CD4-positive, alpha-beta T cell (primary cell): ENCODE measurements at regions of chr19 and their contacts with region 1.

Region 1: DNA sequence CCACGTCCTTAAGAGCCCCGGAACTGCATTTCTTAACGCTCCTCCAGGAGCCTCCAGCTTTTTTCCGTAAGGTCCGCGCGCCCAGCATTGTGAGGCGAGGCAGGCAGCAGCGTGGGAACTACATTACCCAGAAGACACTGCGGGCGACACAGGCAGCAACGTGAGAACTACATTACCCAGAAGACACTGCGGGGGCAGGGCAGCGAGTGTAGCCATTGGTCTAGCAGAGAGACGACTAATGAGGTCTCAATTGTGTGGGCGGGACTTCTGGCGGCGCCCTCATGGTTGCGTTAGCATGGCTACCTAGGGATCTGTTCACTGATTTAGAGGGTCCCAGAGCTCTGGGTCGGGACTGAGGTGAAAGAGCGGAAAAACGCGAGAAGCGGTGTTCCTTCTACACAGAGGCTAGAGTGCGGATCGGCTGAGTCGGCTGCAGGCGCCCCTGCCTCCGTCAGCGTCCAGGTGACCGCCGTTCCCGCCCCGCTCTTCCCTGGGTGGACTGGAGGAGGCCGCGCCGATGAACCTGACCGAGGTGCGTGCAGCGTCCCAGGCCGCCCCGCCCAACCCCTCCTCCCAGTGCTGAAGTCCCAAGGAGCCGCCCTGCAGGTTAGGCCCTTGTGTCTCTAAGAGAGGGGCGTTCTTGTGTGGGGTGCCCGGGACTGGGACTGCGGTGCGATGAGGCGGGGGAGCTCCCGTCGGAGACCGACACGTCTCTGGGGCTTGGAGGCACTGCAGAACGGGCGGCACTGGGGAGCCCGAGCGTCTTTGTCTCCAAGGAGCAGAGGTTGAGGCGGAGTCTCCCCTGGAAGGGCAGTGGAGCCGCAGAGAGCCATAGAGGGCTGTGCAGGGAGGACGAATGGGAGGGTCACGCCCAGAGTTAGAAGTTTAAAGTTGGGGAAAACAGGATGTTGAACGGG is at the start of gene ZNF749:
- DNase-seq: peak; percentile 91 to 99 (median 97)
- ATAC-seq: peak; percentile 100
- H3K4me3 ChIP-seq: peak within 1 kb of the TSS; percentile 79
- H3K4me3 Mint-ChIP-seq: peak within 1 kb of the TSS; percentile 97
- H3K27ac ChIP-seq: peak within 1 kb of the TSS; percentile 47 to 67
- H3K27ac Mint-ChIP-seq: peak within 1 kb of the TSS; percentile 70
- H3K4me1 ChIP-seq: peaks cover 21% of the 10 kb centered on the region
- H3K4me1 Mint-ChIP-seq: peaks cover 31% of the 10 kb centered on the region
- H3K27me3 ChIP-seq: no peaks in the 10 kb centered on the region
- H3K27me3 Mint-ChIP-seq: no peaks in the 10 kb centered on the region
- CTCF ChIP-seq: no peak
- total RNA-seq, gene ZNF749: 5.7 to 6.2 TPM

Region 2: DNA sequence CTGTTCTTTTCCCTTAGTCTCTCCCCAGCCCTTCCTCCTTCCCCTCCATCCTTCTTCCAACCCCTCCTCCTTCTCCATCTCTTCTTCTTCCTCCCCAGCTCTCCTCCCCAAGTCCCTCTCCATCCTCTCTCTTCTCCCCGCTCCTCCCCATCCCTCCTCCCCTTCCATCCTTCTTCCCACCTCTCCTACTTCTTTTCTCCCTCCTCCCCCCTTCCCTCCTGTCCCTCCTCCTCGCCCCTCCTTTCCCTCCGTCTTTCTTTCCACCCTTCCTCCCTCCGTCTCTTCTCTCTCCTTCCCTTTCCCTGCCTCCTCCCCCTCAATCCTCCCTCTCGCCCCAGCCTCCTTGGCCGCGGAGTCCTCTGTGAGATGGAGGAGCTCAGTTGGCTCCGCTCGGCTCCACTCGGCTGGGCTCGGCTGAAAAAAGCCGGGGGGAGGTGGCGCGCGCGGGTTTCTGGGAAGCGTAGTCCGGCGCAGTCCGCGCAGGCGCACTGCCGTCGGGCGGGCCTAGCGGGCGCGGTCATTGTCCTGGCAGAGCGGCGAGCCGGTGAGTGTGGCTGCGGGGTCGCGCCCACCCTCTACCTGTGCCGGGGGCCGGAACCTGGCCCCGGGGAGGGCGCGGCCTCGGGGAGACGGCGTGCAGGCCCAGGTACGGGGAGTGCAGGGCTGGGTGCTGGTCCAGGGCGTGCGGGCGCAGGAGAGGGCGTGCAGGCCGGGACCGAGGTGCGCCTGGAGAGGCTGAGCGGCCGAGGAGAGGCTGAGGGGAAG is 840.4 kb before region 1 on chr19 and contains the start of gene ZNF71:
- CTCF ChIA-PET with region 1: no interaction called
- POLR2A ChIA-PET with region 1: no interaction called
- intact Hi-C with region 1: loop called in 1 of 2 experiments (anchors 10 kb)
- DNase-seq: peak; percentile 79 to 90 (median 84)
- ATAC-seq: peak; percentile 95
- H3K4me3 ChIP-seq: peak within 1 kb of the TSS; percentile 73
- H3K4me3 Mint-ChIP-seq: peak within 1 kb of the TSS; percentile 92
- H3K27ac ChIP-seq: peak within 1 kb of the TSS; percentile 43 to 62
- H3K27ac Mint-ChIP-seq: peak within 1 kb of the TSS; percentile 79
- H3K4me1 ChIP-seq: peaks cover 19% of the 10 kb centered on the region
- H3K4me1 Mint-ChIP-seq: peaks cover 24% of the 10 kb centered on the region
- H3K27me3 ChIP-seq: no peaks in the 10 kb centered on the region
- H3K27me3 Mint-ChIP-seq: no peaks in the 10 kb centered on the region
- CTCF ChIP-seq: no peak
- total RNA-seq, gene ZNF71: 2.2 TPM

Region 3: DNA sequence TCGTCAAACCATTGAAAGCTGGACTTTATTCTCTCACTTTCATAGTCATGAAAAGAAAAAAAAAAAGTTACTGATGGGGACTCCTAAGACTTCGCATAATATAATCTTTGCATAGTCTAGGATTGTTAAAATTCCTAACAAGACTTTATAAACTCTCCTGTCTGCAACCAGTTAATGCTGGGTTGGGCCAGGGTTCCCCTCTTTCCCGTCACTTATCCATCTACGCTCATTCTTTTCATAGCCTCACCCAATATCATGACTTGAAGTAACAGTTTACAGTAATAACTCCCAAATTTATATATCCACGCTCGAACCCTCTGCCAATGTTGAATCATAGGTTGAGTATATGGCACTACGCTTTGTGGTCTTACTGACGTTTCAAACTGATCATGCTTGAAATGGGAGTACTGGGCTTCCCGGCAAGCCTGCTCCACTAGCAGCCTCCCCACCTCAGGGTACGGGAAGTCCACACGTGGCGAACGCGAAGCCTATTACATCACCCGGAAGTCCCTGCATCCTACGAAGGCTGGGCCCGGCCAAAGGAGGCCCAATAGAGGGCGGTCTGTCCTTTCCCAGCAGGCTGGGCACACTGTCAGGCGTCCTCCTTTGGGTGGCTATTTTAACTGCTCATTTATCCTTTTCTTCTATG is 155.8 kb before region 1 on chr19:
- CTCF ChIA-PET with region 1: no interaction called
- POLR2A ChIA-PET with region 1: no interaction called
- intact Hi-C with region 1: loop called in 1 of 2 experiments (anchors 2 kb)
- DNase-seq: peak; percentile 59 to 93 (median 70)
- ATAC-seq: peak; percentile 66
- H3K4me3 ChIP-seq: peak overlapping the region; percentile 76
- H3K4me3 Mint-ChIP-seq: no peak overlapping the region
- H3K27ac ChIP-seq: peak overlapping the region; percentile 95 to 100
- H3K27ac Mint-ChIP-seq: no peak overlapping the region
- H3K4me1 ChIP-seq: peaks cover 42% of the 10 kb centered on the region
- H3K4me1 Mint-ChIP-seq: peaks cover 27% of the 10 kb centered on the region
- H3K27me3 ChIP-seq: no peaks in the 10 kb centered on the region
- H3K27me3 Mint-ChIP-seq: no peaks in the 10 kb centered on the region
- CTCF ChIP-seq: no peak

Region 4: GRCh38 chr19:57389730-57390598 is 45.4 kb before region 1 on chr19 and contains the start of gene ZNF548:
- CTCF ChIA-PET with region 1: no interaction called
- POLR2A ChIA-PET with region 1: no interaction called
- intact Hi-C with region 1: loop called (anchors 1 to 2 kb)
- DNase-seq: peak; percentile 87 to 99 (median 95)
- ATAC-seq: peak; percentile 96
- H3K4me3 ChIP-seq: peak within 1 kb of the TSS; percentile 86
- H3K4me3 Mint-ChIP-seq: peak within 1 kb of the TSS; percentile 98
- H3K27ac ChIP-seq: peak within 1 kb of the TSS; percentile 86 to 95
- H3K27ac Mint-ChIP-seq: peak within 1 kb of the TSS; percentile 95
- H3K4me1 ChIP-seq: peaks cover 18% of the 10 kb centered on the region
- H3K4me1 Mint-ChIP-seq: peaks cover 33% of the 10 kb centered on the region
- H3K27me3 ChIP-seq: no peaks in the 10 kb centered on the region
- H3K27me3 Mint-ChIP-seq: no peaks in the 10 kb centered on the region
- CTCF ChIP-seq: no peak
- total RNA-seq, gene ZNF548: 68.3 to 70.4 TPM

Region 5: DNA sequence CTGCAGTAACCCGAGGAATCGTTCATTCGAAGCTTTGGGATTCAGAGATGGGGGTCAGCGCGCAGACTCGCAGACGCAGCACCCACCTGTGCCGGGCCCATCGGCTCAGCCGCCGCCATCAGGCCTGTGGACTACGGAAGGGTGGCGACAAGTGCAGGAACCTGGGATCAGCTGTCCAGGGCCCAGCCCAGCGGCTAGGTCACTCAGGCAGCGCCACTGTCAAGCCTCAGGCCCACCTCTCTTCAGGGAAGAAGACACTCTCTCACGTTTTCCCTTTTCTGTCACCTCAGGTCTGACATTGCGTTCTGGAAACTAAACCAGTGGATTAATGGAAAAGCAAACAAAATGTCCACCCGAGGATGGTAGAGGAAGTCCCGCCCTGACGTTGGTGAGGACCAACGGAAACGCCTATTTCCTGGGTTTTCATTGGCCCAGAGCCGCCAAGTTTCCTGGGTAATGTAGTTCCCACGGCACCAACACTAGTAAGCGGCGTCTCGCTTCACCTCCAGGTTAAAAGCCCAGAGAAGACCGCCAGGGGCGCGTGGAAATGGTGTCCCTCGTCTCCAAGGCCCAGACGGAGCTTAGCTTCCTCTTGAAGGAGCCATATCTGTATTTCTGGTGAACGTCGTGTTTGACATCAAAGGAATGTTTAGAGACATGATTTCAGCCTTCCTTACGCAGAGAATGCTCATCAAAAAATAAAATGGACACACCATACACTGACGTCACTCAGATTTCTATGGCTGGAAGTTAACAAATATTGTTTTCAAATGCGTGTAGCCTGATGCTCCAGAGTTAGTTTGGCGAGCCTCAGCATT is 42.1 kb after region 1 on chr19 and contains the start of gene ZNF772:
- CTCF ChIA-PET with region 1: interaction called, 4 read pairs
- POLR2A ChIA-PET with region 1: no interaction called
- intact Hi-C with region 1: loop called (anchors 1 kb)
- DNase-seq: peak; percentile 73 to 95 (median 85)
- ATAC-seq: peak; percentile 98
- H3K4me3 ChIP-seq: peak within 1 kb of the TSS; percentile 85
- H3K4me3 Mint-ChIP-seq: peak within 1 kb of the TSS; percentile 90
- H3K27ac ChIP-seq: peak within 1 kb of the TSS; percentile 46 to 54
- H3K27ac Mint-ChIP-seq: peak within 1 kb of the TSS; percentile 77
- H3K4me1 ChIP-seq: peaks cover 16% of the 10 kb centered on the region
- H3K4me1 Mint-ChIP-seq: peaks cover 19% of the 10 kb centered on the region
- H3K27me3 ChIP-seq: no peaks in the 10 kb centered on the region
- H3K27me3 Mint-ChIP-seq: no peaks in the 10 kb centered on the region
- CTCF ChIP-seq: peak; percentile 33
- total RNA-seq, gene ZNF772: 2.5 to 3.2 TPM

Region 6: GRCh38 chr19:57559404-57560025 is 124.2 kb after region 1 on chr19 and contains the start of gene ZNF550:
- CTCF ChIA-PET with region 1: no interaction called
- POLR2A ChIA-PET with region 1: no interaction called
- intact Hi-C with region 1: loop called in 1 of 2 experiments (anchors 2 kb)
- DNase-seq: peak; percentile 77 to 93 (median 86)
- ATAC-seq: peak; percentile 98
- H3K4me3 ChIP-seq: peak within 1 kb of the TSS; percentile 94
- H3K4me3 Mint-ChIP-seq: peak within 1 kb of the TSS; percentile 95
- H3K27ac ChIP-seq: peak within 1 kb of the TSS; percentile 44 to 45
- H3K27ac Mint-ChIP-seq: peak within 1 kb of the TSS; percentile 64
- H3K4me1 ChIP-seq: peaks cover 25% of the 10 kb centered on the region
- H3K4me1 Mint-ChIP-seq: peaks cover 34% of the 10 kb centered on the region
- H3K27me3 ChIP-seq: peaks cover 0 to 5% of the 10 kb centered on the region in 2 experiments
- H3K27me3 Mint-ChIP-seq: peaks cover 9% of the 10 kb centered on the region
- CTCF ChIP-seq: no peak
- total RNA-seq, gene ZNF550: 15.7 to 20.0 TPM